A549 (cell line): ENCODE measurements at regions of chr10 and their contacts with region 1.

Region 1: GRCh38 chr10:95363303-95363912 is 72.6 kb upstream of the PDLIM1 start:
- DNase-seq: peak; percentile 70 to 76
- ATAC-seq: peak; percentile 62 to 87; a peak in 3 of 6 replicates
- H3K4me3 ChIP-seq: no peak overlapping the region
- H3K27ac ChIP-seq: peak overlapping the region; percentile 9 to 23; a peak in 1 of 6 replicates
- H3K4me1 ChIP-seq: peaks cover 14% of the 10 kb centered on the region
- CTCF ChIP-seq: peak; percentile 95
- EP300 ChIP-seq: no peak
- POLR2A ChIP-seq: no peak
- RAD21 ChIP-seq: peak; percentile 98 to 99

Region 2: GRCh38 chr10:95183271-95184230 is 179.9 kb before region 1 on chr10:
- CTCF ChIA-PET with region 1: interaction called, 50 read pairs
- POLR2A ChIA-PET with region 1: no interaction called
- DNase-seq: peak; percentile 87 to 92
- ATAC-seq: peak; percentile 98 to 99
- H3K4me3 ChIP-seq: peak overlapping the region; percentile 57
- H3K27ac ChIP-seq: peak overlapping the region; percentile 89 to 99
- H3K4me1 ChIP-seq: peaks cover 26% of the 10 kb centered on the region
- CTCF ChIP-seq: peak; percentile 100
- EP300 ChIP-seq: no peak
- POLR2A ChIP-seq: peak; percentile 27; the same call in 1 of the 2 replicates
- RAD21 ChIP-seq: peak; percentile 79 to 98

Region 3: GRCh38 chr10:95260397-95260881 is 103.0 kb before region 1 on chr10:
- CTCF ChIA-PET with region 1: interaction called, 27 read pairs
- POLR2A ChIA-PET with region 1: no interaction called
- DNase-seq: peak; percentile 62 to 84
- ATAC-seq: peak; percentile 92
- H3K4me3 ChIP-seq: no peak overlapping the region
- H3K27ac ChIP-seq: peak overlapping the region; percentile 74 to 90
- H3K4me1 ChIP-seq: peaks cover 53% of the 10 kb centered on the region
- CTCF ChIP-seq: no peak
- EP300 ChIP-seq: no peak; a peak in 1 of 5 replicates
- POLR2A ChIP-seq: no peak
- RAD21 ChIP-seq: no peak

Region 4: DNA sequence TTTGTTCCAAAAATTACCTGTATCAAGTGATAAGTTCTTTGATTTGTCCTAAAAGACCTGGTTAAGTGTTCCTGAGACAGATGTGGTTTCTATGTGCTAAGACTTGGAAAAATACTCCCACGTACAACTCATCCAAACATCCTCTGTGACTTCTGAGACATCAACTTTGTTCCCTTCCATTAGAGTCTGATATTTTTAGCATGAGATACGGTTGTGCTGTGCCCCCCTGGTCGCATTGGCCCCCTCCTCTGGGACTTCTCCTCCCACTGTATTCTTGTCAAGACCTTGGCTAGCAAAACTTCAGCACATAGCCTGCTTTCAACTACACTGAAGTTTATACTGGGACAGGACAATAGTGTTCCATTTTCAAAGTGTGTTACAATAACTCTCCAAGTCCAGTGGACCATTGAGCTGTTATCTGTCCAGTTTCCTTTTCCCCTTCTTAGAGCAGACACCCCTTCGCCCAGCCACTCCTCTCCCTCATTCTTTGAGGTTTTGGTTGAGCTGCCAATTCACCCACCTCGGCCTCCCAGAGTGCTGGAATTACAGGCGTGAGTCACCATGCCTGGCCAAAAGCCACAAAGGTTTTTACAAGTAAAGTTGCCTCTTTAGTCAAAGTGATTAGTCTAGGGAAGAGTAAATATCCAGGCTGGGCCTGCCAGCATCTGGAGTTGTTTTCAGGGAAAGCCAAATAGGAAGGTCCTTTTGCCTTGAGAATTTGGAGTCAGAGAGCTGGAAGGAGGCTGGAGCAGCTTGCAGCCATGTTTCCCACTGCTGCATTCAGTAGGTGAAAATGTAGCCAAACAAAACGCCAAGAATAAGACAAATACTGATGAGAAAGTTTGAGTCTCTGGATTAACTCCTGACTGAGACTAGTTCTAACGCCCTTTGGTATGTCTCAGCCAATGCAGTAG is 54.8 kb before region 1 on chr10:
- CTCF ChIA-PET with region 1: interaction called, 14 read pairs
- POLR2A ChIA-PET with region 1: no interaction called
- DNase-seq: peak; percentile 62 to 90
- ATAC-seq: peak; percentile 86 to 94
- H3K4me3 ChIP-seq: no peak overlapping the region
- H3K27ac ChIP-seq: peak overlapping the region; percentile 70 to 84
- H3K4me1 ChIP-seq: peaks cover 62% of the 10 kb centered on the region
- CTCF ChIP-seq: no peak
- EP300 ChIP-seq: peak in 1 of 2 experiments; percentile 42; a peak in 1 of 5 replicates
- POLR2A ChIP-seq: no peak
- RAD21 ChIP-seq: peak; percentile 27 to 30; a peak in 3 of 5 replicates

Region 5: DNA sequence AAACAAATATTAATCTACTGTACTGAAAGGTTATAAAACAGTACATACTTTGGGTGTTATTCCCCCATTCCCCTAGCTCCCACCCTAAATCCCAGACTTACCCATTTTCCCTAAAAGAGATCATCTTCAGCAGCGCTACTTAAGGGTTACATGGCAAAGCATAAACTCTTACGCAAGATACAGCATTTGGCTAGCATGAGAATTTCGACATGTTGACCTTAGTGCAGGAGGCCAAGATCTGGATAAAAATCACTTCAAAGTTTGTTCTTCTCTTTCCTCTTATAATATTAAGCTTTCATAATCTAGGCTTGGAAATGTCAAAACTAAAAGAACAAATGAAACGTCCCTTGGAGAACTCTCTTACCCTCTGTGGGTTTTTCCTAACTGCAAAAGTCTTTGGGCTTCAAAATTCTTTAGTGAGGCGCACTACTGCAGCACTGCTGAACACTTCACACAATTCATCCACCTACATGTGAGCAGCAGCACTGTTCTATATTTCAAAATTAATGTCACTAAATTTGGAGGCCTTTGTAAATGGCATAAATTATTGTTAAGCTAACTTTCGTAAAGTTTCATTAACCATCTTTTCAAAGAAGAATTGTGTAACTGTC is 13.1 kb before region 1 on chr10:
- CTCF ChIA-PET with region 1: interaction called, 119 read pairs
- POLR2A ChIA-PET with region 1: no interaction called
- DNase-seq: no peak
- ATAC-seq: no peak
- H3K4me3 ChIP-seq: no peak overlapping the region
- H3K27ac ChIP-seq: peak overlapping the region in 1 of 2 experiments; percentile 49; a peak in 3 of 6 replicates
- H3K4me1 ChIP-seq: peaks cover 32% of the 10 kb centered on the region
- CTCF ChIP-seq: no peak
- EP300 ChIP-seq: no peak
- POLR2A ChIP-seq: no peak
- RAD21 ChIP-seq: no peak

Region 6: DNA sequence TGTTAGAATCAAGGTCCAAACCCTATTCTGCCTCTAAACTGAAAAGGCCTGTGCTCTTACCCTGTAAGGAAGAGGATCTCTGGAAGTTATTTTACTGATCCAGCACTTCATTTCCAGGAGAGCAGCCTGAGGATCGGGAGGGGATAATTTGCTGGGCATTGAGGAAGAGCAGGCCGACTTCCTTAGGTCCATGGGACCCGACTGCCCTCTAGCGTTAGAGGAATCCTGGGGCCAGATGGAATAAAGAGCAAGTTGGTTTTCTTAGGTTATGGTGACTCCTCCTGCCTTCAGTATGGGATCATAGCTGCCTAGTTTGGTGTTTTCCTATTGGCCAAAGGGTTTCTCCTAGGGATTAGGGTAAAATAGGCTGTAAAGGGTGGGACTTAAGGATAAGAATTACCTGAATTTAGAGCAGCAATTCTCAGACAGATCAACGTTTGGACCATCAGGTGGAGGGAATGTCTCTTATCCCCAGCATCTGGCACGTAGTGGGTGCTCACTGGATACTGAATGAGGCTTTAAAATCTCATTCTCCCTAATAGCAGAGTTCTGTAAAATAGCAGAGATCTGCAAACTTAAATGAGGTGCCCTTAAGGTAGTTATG is 237.8 kb after region 1 on chr10:
- CTCF ChIA-PET with region 1: interaction called, 12 read pairs
- POLR2A ChIA-PET with region 1: no interaction called
- DNase-seq: peak; percentile 76 to 87
- ATAC-seq: peak; percentile 96 to 98
- H3K4me3 ChIP-seq: no peak overlapping the region
- H3K27ac ChIP-seq: no peak overlapping the region
- H3K4me1 ChIP-seq: no peaks in the 10 kb centered on the region
- CTCF ChIP-seq: peak; percentile 97
- EP300 ChIP-seq: no peak
- POLR2A ChIP-seq: no peak
- RAD21 ChIP-seq: peak; percentile 97 to 98